ENCODE measurements at regions of chr11 and their contacts with region 1.

Region 1: DNA sequence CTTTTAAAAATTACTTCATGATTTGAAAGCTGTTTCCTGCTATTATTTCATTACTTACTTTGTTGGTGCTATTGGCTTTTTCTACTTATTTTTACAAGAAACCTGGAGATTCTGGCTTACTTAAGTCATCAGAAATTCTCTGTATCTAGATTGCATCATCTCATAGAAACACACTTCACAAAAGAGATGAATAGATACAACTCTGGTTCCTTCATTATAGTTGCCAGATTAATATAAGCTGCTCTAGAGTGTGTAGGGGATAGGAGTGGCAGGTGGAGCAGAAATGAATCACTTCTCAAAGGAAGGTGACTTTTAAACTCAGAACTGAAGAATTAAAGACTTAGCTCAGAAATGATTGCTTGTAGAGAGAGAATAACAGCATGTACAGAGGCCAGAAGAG is 20.0 kb downstream of the CYP2R1 start:
- DNase-seq: no peak
- ATAC-seq: no peak
- H3K4me3 ChIP-seq: no peak overlapping the region
- H3K4me3 Mint-ChIP-seq: no peak overlapping the region
- H3K27ac ChIP-seq: no peak overlapping the region
- H3K27ac Mint-ChIP-seq: peak overlapping the region; percentile 14 to 57
- H3K4me1 ChIP-seq: no peaks in the 10 kb centered on the region
- H3K4me1 Mint-ChIP-seq: peaks cover 0 to 14% (median 4%) of the 10 kb centered on the region in 3 donors
- H3K27me3 ChIP-seq: no peaks in the 10 kb centered on the region
- H3K27me3 Mint-ChIP-seq: no peaks in the 10 kb centered on the region

Region 2: DNA sequence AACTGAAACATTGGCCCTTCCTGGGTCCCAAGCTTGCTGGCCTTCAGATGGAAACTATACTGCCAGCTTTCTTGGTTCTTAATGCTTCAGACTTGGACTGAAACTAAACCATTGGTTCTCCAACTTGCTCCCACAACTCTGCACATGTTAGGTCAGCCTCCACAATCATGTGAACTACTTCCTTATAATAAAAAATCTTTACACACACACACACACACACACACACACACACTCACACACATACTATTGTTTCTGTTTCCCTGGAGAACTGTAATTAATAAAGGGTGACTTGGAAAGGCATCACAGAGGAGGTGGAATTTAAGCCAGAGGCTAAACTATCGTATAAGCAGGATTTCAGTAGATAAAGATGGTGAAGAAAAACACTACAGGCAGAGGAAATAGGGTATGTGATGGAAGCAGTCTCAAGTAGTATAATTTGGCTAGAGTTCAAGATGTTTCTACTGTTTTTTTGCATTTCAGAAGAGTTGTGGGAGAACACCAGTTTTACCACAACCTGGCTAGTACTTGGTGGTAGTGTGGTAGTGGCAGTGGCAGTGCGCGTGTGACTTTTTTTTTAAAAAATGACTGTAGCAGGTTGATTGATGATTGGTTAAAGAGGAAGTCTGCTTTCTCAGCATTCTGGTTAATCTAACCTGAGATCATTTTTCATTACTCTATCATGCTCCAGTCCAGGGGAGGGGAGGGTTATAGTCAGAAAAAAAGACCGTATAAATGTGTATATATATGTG is 158.4 kb before region 1 on chr11:
- CTCF ChIA-PET with region 1: interaction called in 1 of 2 experiments, 11 read pairs
- POLR2A ChIA-PET with region 1: no interaction called
- DNase-seq: peak in 29 of 35 experiments; percentile 6 to 74 (median 29)
- ATAC-seq: peak; percentile 50 to 89 (median 86)
- H3K4me3 ChIP-seq: no peak overlapping the region
- H3K4me3 Mint-ChIP-seq: peak overlapping the region; percentile 51 to 57 (median 54)
- H3K27ac ChIP-seq: peak overlapping the region; percentile 36
- H3K27ac Mint-ChIP-seq: peak overlapping the region; percentile 87 to 91
- H3K4me1 ChIP-seq: peaks cover 3 to 16% of the 10 kb centered on the region in 2 experiments
- H3K4me1 Mint-ChIP-seq: peaks cover 43 to 56% (median 47%) of the 10 kb centered on the region in 3 donors
- H3K27me3 ChIP-seq: no peaks in the 10 kb centered on the region
- H3K27me3 Mint-ChIP-seq: no peaks in the 10 kb centered on the region

Region 3: DNA sequence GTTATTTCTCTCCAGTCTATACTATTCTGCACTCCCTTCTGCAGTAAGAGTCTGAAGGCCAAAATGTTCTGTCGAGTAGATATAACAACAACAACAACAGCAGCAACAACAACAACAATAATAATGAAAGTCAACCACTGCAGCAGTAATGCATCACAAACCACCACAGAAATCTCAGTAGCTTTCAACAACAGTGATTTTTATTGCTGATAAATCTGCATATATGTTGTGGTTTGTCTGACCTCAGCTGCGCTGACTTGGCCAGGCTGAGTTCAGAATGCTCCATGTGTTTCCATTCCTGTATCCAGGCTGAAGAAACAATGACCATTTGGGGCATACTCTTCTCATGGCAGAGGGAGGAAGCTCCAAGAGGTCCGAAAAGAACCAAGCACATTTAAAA is 52.3 kb after region 1 on chr11:
- CTCF ChIA-PET with region 1: no interaction called
- POLR2A ChIA-PET with region 1: no interaction called
- DNase-seq: no peak
- ATAC-seq: no peak
- H3K4me3 ChIP-seq: no peak overlapping the region
- H3K4me3 Mint-ChIP-seq: no peak overlapping the region
- H3K27ac ChIP-seq: no peak overlapping the region
- H3K27ac Mint-ChIP-seq: no peak overlapping the region
- H3K4me1 ChIP-seq: no peaks in the 10 kb centered on the region
- H3K4me1 Mint-ChIP-seq: no peaks in the 10 kb centered on the region
- H3K27me3 ChIP-seq: no peaks in the 10 kb centered on the region
- H3K27me3 Mint-ChIP-seq: peaks cover 2 to 3% of the 10 kb centered on the region in 2 donors